ENCODE measurements at regions of chr1 and their contacts with region 1.

Region 1: GRCh38 chr1:222713091-222713961 is 962 bp downstream of the BROX start:
- DNase-seq: peak; percentile 81 to 97 (median 92)
- ATAC-seq: peak; percentile 69
- H3K4me3 ChIP-seq: peak overlapping the region; percentile 90
- H3K4me3 Mint-ChIP-seq: peak overlapping the region; percentile 99
- H3K27ac ChIP-seq: peak overlapping the region; percentile 97 to 98
- H3K27ac Mint-ChIP-seq: peak overlapping the region; percentile 100
- H3K4me1 ChIP-seq: peaks cover 23% of the 10 kb centered on the region
- H3K4me1 Mint-ChIP-seq: peaks cover 62% of the 10 kb centered on the region
- H3K27me3 ChIP-seq: no peaks in the 10 kb centered on the region
- H3K27me3 Mint-ChIP-seq: no peaks in the 10 kb centered on the region
- CTCF ChIP-seq: peak; percentile 34

Region 2: DNA sequence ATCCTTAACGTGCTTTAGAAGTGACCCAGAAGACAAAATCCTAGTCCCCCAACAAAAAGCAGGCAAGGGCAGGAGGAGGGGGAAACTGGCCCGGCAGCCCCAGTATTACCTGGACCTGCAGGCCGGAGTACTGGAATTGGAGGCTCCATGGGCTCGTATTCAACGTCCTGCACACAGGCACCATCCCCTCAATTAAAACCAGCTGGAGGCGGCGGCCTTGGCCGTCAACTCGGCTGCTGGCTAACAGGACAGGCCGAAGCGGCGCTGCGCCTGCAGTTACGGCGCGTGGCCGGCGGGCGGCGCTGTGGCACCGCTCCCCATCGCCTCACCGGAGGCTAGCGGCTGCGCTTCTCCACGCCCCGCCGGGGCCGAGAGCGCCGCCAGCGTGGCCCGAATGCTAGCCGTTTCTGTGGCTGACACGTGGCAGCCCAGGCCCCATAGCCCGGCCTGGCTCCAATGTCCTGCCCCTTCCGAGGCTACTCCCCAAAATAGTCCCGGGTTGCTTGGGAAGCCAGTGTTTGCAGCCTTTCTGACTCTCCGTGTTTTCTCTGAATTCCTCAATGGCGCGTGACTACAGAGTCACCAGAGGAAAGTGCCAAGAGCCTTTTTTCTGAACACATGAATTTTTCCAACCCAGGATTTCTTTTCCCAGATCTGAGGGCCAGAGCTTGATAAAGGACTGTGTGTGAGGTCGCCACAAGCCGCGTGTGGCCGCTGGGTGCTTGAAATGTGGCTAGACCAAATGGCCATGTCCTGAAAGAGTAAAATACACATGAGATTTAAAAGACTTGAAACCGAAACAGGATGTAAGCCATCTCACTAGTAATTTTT is 247.9 kb before region 1 on chr1:
- CTCF ChIA-PET with region 1: interaction called, 5 read pairs
- POLR2A ChIA-PET with region 1: interaction called, 4 read pairs
- intact Hi-C with region 1: loop called (anchors 2 kb)
- DNase-seq: peak; percentile 49 to 89 (median 72)
- ATAC-seq: peak; percentile 91
- H3K4me3 ChIP-seq: peak overlapping the region; percentile 69
- H3K4me3 Mint-ChIP-seq: peak overlapping the region; percentile 94
- H3K27ac ChIP-seq: peak overlapping the region; percentile 25 to 34
- H3K27ac Mint-ChIP-seq: peak overlapping the region; percentile 93
- H3K4me1 ChIP-seq: peaks cover 10% of the 10 kb centered on the region
- H3K4me1 Mint-ChIP-seq: peaks cover 19% of the 10 kb centered on the region
- H3K27me3 ChIP-seq: no peaks in the 10 kb centered on the region
- H3K27me3 Mint-ChIP-seq: peaks cover 5% of the 10 kb centered on the region
- CTCF ChIP-seq: peak; percentile 100

Region 3: GRCh38 chr1:222606757-222607156 is 106.6 kb before region 1 on chr1:
- CTCF ChIA-PET with region 1: no interaction called
- POLR2A ChIA-PET with region 1: no interaction called
- intact Hi-C with region 1: no loop called
- DNase-seq: no peak
- ATAC-seq: no peak
- H3K4me3 ChIP-seq: no peak overlapping the region
- H3K4me3 Mint-ChIP-seq: no peak overlapping the region
- H3K27ac ChIP-seq: no peak overlapping the region
- H3K27ac Mint-ChIP-seq: no peak overlapping the region
- H3K4me1 ChIP-seq: no peaks in the 10 kb centered on the region
- H3K4me1 Mint-ChIP-seq: no peaks in the 10 kb centered on the region
- H3K27me3 ChIP-seq: no peaks in the 10 kb centered on the region
- H3K27me3 Mint-ChIP-seq: peaks cover 28% of the 10 kb centered on the region
- CTCF ChIP-seq: no peak

Region 4: DNA sequence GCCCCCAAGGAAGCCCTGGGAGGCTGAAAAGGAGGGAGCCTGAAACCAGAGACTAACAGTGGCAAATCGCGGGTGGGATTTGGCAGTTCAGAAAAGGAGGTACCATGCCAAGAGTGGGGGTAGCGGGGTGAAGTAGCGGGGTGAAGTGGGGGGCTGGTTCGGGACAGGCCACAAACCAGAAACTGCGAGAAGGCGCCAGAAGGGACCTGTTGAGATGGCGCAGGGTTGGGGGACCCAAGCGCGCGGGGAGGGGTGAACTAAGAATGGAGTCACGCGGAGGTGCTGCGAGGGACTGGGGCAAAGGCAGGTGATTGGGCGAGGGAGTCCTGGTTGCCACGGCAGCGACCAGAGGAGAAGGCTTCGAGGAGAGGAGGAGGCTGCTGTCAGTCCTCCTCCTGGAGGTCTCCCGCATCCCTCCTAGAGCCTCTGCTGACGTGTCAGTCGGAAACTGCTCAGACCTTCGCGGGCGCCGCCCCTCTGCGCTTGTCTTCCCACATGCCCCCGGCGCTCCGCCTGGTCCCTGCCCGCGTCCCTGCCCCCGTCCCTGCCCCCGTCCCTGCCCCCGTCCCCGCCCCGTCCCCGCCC is 95.9 kb before region 1 on chr1:
- CTCF ChIA-PET with region 1: no interaction called
- POLR2A ChIA-PET with region 1: interaction called, 10 read pairs
- intact Hi-C with region 1: loop called in 1 of 2 experiments (anchors 1 kb)
- DNase-seq: peak; percentile 85 to 99 (median 90)
- ATAC-seq: peak; percentile 90
- H3K4me3 ChIP-seq: peak overlapping the region; percentile 69
- H3K4me3 Mint-ChIP-seq: peak overlapping the region; percentile 94
- H3K27ac ChIP-seq: peak overlapping the region; percentile 43 to 80
- H3K27ac Mint-ChIP-seq: peak overlapping the region; percentile 92
- H3K4me1 ChIP-seq: peaks cover 18% of the 10 kb centered on the region
- H3K4me1 Mint-ChIP-seq: peaks cover 40% of the 10 kb centered on the region
- H3K27me3 ChIP-seq: peaks cover 0 to 6% of the 10 kb centered on the region in 2 experiments
- H3K27me3 Mint-ChIP-seq: peaks cover 34% of the 10 kb centered on the region
- CTCF ChIP-seq: no peak

Region 5: GRCh38 chr1:222654849-222655248 is 58.5 kb before region 1 on chr1:
- CTCF ChIA-PET with region 1: interaction called, 14 read pairs
- POLR2A ChIA-PET with region 1: interaction called, 18 read pairs
- intact Hi-C with region 1: loop called in 1 of 2 experiments (anchors 1 kb)
- DNase-seq: peak; percentile 50 to 95 (median 64)
- ATAC-seq: peak; percentile 98
- H3K4me3 ChIP-seq: no peak overlapping the region
- H3K4me3 Mint-ChIP-seq: peak overlapping the region; percentile 49
- H3K27ac ChIP-seq: peak overlapping the region; percentile 77 to 90
- H3K27ac Mint-ChIP-seq: peak overlapping the region; percentile 87
- H3K4me1 ChIP-seq: peaks cover 25% of the 10 kb centered on the region
- H3K4me1 Mint-ChIP-seq: peaks cover 54% of the 10 kb centered on the region
- H3K27me3 ChIP-seq: no peaks in the 10 kb centered on the region
- H3K27me3 Mint-ChIP-seq: no peaks in the 10 kb centered on the region
- CTCF ChIP-seq: peak; percentile 45

Region 6: DNA sequence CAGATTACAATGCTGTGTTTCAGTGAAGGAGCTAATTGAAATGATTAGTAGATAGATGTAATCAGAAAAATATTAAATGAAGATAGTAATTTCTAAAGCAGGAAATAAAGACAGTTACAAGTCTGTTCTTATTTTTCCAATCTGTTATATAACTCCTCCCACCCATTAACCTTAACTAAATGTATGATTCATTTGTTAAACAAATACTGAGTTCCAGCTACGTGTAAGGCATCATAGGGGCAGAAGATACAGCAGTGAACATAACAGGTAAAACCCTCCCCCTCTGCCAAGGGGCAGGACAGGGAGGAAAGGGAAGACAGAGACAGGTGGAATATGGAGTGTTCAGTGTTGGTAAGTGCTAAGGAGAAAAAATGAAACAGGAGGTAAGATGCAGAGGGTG is 23.6 kb after region 1 on chr1 and contains the start of gene FAM177B:
- CTCF ChIA-PET with region 1: no interaction called
- POLR2A ChIA-PET with region 1: interaction called, 11 read pairs
- intact Hi-C with region 1: no loop called
- DNase-seq: no peak
- ATAC-seq: no peak
- H3K4me3 ChIP-seq: no peak within 1 kb of the TSS
- H3K4me3 Mint-ChIP-seq: no peak within 1 kb of the TSS
- H3K27ac ChIP-seq: no peak within 1 kb of the TSS
- H3K27ac Mint-ChIP-seq: no peak within 1 kb of the TSS
- H3K4me1 ChIP-seq: no peaks in the 10 kb centered on the region
- H3K4me1 Mint-ChIP-seq: no peaks in the 10 kb centered on the region
- H3K27me3 ChIP-seq: no peaks in the 10 kb centered on the region
- H3K27me3 Mint-ChIP-seq: no peaks in the 10 kb centered on the region
- CTCF ChIP-seq: no peak
- total RNA-seq, gene FAM177B: not detected

Region 7: DNA sequence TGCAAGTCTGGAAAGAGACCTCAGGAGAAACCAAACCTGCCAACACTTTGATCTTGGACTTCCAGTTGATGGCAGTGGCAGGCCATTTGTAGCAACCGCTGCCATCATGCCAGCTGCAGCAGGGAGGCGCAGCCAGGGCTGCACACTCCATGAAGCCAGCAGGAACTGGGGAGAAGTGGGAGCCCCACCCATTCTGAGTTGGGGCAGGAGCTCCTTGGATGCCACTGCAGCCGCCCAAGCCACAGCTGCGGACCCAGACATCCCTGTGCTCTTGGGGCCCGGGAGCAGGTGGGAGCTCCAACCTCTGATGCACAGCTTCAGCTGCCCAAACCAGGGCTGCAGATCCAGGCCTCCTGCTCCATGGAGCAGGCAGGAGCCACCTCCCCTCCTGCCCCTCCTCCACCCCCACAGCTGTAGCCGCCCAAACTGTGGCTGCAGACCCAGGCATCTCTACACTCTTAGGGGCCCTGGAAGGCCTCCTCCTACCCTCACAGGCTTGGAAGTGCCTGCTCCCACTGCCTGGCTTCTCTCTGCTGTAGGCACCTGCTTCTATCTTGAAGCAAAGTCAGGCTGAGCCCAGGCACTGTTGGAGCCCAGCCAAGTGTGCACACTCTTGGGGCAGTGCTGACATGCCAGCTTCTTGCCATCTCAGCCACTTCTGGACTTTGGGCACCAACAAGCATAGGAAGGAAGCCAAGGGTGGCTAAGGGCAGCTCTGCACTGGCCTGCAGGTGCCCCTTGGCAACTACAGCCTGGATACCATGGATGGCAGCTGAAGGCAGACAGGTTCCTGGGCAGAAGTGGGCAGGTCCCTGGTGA is 81.5 kb after region 1 on chr1:
- CTCF ChIA-PET with region 1: no interaction called
- POLR2A ChIA-PET with region 1: no interaction called
- intact Hi-C with region 1: no loop called
- DNase-seq: no peak
- ATAC-seq: no peak
- H3K4me3 ChIP-seq: no peak overlapping the region
- H3K4me3 Mint-ChIP-seq: no peak overlapping the region
- H3K27ac ChIP-seq: no peak overlapping the region
- H3K27ac Mint-ChIP-seq: no peak overlapping the region
- H3K4me1 ChIP-seq: peaks cover 6% of the 10 kb centered on the region
- H3K4me1 Mint-ChIP-seq: no peaks in the 10 kb centered on the region
- H3K27me3 ChIP-seq: no peaks in the 10 kb centered on the region
- H3K27me3 Mint-ChIP-seq: no peaks in the 10 kb centered on the region
- CTCF ChIP-seq: no peak

Region 8: GRCh38 chr1:224434691-224435317 is 1721.5 kb after region 1 on chr1 and contains the start of gene WDR26:
- CTCF ChIA-PET with region 1: no interaction called
- POLR2A ChIA-PET with region 1: no interaction called
- intact Hi-C with region 1: loop called in 1 of 2 experiments (anchors 10 kb)
- DNase-seq: peak; percentile 62 to 93 (median 74)
- ATAC-seq: peak; percentile 82
- H3K4me3 ChIP-seq: peak within 1 kb of the TSS; percentile 84
- H3K4me3 Mint-ChIP-seq: peak within 1 kb of the TSS; percentile 99
- H3K27ac ChIP-seq: peak within 1 kb of the TSS; percentile 91 to 95
- H3K27ac Mint-ChIP-seq: peak within 1 kb of the TSS; percentile 100
- H3K4me1 ChIP-seq: peaks cover 29% of the 10 kb centered on the region
- H3K4me1 Mint-ChIP-seq: peaks cover 58% of the 10 kb centered on the region
- H3K27me3 ChIP-seq: no peaks in the 10 kb centered on the region
- H3K27me3 Mint-ChIP-seq: no peaks in the 10 kb centered on the region
- CTCF ChIP-seq: no peak
- total RNA-seq, gene WDR26: 173 to 176 TPM

Measured in CD4-positive, alpha-beta T cell (primary cell).